Colonic mucosa (tissue), 4 donors: ENCODE measurements at regions of chr20 and their contacts with region 1.

Region 1: DNA sequence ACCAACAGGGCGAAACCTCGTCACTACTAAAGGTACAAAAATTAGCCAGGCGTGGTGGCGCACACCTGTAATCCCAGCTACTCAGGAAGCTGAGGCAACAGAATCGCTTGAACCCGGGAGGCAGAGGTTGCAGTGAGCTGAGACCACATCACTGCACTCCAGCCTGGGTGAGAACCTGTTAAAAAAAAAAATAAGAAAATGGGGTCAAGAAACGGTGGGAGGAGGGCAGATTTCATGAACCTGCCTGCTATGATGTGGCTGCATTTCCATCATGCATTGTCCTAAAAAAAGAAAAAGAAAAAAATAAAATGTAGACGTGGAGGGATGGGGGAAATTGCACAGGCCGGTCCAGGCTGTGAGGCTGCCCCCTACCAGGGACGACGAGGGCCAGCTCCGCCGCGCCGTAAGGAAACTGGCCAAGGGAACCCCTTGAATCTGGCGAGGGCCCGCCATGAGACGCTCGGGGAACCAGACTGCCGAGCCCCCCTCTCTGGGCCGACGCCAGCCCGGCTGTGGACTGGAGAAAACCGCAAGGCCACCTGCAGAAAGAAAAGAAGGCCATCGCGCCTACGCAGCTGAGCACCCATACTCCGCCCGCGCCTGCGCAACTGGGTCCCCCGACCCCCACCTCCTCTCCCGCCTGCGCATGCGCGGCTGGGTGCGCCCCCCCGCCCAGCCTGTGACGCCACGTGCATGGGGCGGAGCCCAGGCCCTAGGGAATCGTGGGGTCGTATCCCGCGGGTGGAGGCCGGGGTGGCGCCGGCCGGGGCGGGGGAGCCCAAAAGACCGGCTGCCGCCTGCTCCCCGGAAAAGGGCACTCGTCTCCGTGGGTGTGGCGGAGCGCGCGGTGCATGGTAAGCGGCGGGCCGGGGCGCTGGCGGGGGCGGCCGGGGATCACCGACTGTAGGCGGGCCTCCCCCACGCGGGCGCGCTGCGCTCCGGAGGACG is at the start of gene ENTPD6:
- DNase-seq: peak; percentile 94
- H3K4me3 ChIP-seq: peak within 1 kb of the TSS; percentile 83
- H3K27ac ChIP-seq: peak within 1 kb of the TSS; percentile 94
- H3K4me1 ChIP-seq: peaks cover 10% of the 10 kb centered on the region
- H3K27me3 ChIP-seq: no peaks in the 10 kb centered on the region
- CTCF ChIP-seq: no peak
- total RNA-seq, gene ENTPD6: 120 to 201 TPM

Region 2: GRCh38 chr20:25247956-25248785 is 52.9 kb after region 1 on chr20 and contains the start of gene PYGB:
- intact Hi-C with region 1: loop called (anchors 5 kb)
- DNase-seq: no peak
- H3K4me3 ChIP-seq: peak within 1 kb of the TSS; percentile 79
- H3K27ac ChIP-seq: peak within 1 kb of the TSS; percentile 92
- H3K4me1 ChIP-seq: peaks cover 7% of the 10 kb centered on the region
- H3K27me3 ChIP-seq: no peaks in the 10 kb centered on the region
- CTCF ChIP-seq: no peak
- total RNA-seq, gene PYGB: 211 to 295 TPM

Region 3: DNA sequence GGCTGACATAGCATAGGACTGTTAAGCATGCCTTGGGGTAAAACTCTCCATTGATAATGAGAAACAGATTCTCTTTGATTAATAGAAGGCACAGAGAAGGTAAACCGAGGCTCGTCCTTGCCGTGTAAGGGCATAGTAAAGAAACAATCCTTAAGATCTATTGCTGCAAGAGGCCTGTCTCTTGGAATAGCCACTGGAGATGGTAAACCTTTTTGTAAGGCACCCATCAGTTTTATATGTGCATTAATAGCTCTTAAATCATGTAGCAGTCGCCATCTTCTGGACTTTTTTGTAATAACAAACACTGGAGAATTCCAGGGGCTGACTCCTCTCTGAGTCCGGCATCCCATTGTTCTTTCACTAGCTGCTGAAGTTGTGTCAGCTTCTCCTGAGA is 203.7 kb after region 1 on chr20:
- intact Hi-C with region 1: loop called (anchors 5 kb)
- DNase-seq: peak; percentile 56
- H3K4me3 ChIP-seq: no peak overlapping the region
- H3K27ac ChIP-seq: peak overlapping the region; percentile 23
- H3K4me1 ChIP-seq: no peaks in the 10 kb centered on the region
- H3K27me3 ChIP-seq: no peaks in the 10 kb centered on the region
- CTCF ChIP-seq: peak; percentile 50